Transverse colon (tissue), 4 donors: ENCODE measurements at regions of chr19 and their contacts with region 1.

Region 1: GRCh38 chr19:3403489-3404323 is 37.3 kb downstream of the NFIC start:
- DNase-seq: peak; percentile 80
- H3K4me3 ChIP-seq: peak overlapping the region in 3 of 4 donors; percentile 19 to 43 (median 24)
- H3K27ac ChIP-seq: peak overlapping the region; percentile 96 to 100 (median 98)
- H3K4me1 ChIP-seq: peaks cover 7 to 55% (median 30%) of the 10 kb centered on the region in 4 donors
- H3K27me3 ChIP-seq: no peaks in the 10 kb centered on the region
- CTCF ChIP-seq: no peak
- EP300 ChIP-seq: peak; percentile 97
- POLR2A ChIP-seq: no peak

Region 2: DNA sequence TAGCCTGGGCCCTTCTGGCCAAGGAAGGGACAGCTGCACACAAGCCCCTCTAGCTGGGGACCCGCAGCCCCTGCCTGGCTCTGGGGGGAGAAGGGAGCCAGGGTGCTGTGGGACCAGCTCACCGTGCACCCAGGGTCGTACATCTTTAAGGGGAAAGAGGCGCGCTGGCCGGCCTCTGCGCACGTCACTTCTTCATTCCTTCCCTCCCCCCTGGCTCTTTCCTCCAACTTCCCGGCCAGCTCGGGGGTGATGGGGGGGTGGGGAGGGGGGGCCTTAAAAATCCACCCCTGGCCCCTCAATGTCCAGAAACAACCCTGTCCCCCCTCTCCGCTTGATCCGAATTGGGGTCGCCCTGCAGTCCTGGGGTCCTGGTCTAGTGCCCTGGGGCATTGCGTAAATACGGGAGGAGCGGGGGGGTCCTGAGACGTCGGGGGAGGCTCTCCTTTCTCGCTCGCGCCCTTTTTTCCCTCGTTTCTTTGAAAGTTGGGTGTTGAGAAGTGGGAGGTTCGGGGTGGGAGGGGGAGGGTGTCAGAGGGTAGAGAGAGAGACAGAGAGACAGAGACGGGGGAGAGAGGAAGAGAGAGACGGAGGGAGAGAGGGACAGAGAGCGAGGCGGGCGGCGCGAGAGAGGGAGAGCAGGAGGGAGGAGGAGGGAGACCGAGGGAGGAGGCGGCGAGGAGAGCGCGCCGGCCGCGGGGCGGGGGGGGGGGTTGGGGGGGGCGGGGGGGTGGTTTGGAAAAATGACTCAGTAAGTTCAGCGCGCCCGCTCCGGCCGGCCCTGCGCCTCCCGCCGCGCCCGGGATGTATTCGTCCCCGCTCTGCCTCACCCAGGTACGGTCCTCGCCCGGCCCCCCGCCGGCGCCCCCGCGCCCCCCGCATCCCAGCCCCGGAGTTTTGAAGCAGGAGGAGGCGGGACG is 37.6 kb before region 1 on chr19 and contains the start of gene NFIC:
- in situ Hi-C with region 1: no loop called
- intact Hi-C with region 1: loop called (anchors 2 kb)
- DNase-seq: peak; percentile 71
- H3K4me3 ChIP-seq: peak within 1 kb of the TSS; percentile 59 to 91 (median 84)
- H3K27ac ChIP-seq: peak within 1 kb of the TSS; percentile 94 to 100 (median 97)
- H3K4me1 ChIP-seq: peaks cover 7 to 72% (median 33%) of the 10 kb centered on the region in 4 donors
- H3K27me3 ChIP-seq: no peaks in the 10 kb centered on the region
- CTCF ChIP-seq: no peak
- EP300 ChIP-seq: no peak
- POLR2A ChIP-seq: peak; percentile 30
- total RNA-seq, gene NFIC: 39.9 to 145 (median 68.1) TPM

Region 3: DNA sequence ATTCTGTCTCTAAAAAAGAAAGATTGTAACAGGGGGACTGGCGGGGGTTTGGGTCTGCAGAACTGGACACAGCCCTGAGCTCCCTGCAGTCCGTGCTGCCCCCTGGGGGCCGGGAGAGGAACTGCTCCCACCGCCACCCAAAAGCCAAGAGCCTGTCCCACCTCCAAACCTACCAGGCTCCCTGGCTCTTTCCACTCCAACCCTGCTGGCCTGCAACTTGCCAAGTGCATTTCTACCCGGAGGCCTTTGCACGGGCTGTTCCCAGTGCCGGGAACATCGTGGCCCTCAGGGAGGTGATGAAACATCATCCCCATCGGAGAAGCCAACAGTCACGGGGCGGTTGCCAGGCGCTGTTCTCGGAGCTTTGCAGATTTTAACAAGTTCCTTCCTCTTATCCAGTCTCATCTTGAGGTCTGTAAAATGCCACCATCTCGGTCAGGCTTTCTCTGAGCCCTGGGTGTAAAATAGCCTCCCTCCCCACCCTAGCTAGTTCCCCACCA is 25.9 kb after region 1 on chr19:
- in situ Hi-C with region 1: no loop called
- intact Hi-C with region 1: loop called (anchors 2 kb)
- DNase-seq: peak; percentile 90
- H3K4me3 ChIP-seq: no peak overlapping the region
- H3K27ac ChIP-seq: peak overlapping the region; percentile 84 to 90 (median 88)
- H3K4me1 ChIP-seq: peaks cover 16 to 40% (median 25%) of the 10 kb centered on the region in 4 donors
- H3K27me3 ChIP-seq: no peaks in the 10 kb centered on the region
- CTCF ChIP-seq: peak; percentile 98 to 99 (median 99)
- EP300 ChIP-seq: peak; percentile 100
- POLR2A ChIP-seq: no peak

Region 4: GRCh38 chr19:4457654-4458395 is 1054.1 kb after region 1 on chr19 and contains the start of gene UBXN6:
- in situ Hi-C with region 1: no loop called
- intact Hi-C with region 1: no loop called
- DNase-seq: peak; percentile 98
- H3K4me3 ChIP-seq: peak within 1 kb of the TSS; percentile 74 to 95 (median 86)
- H3K27ac ChIP-seq: peak within 1 kb of the TSS; percentile 86 to 96 (median 93)
- H3K4me1 ChIP-seq: peaks cover 15 to 29% (median 22%) of the 10 kb centered on the region in 4 donors
- H3K27me3 ChIP-seq: no peaks in the 10 kb centered on the region
- CTCF ChIP-seq: peak in 3 of 5 experiments; percentile 8 to 54 (median 35)
- EP300 ChIP-seq: no peak
- POLR2A ChIP-seq: peak; percentile 38
- total RNA-seq, gene UBXN6: 72.2 to 314 (median 132) TPM